Common myeloid progenitor, CD34-positive (primary cell): ENCODE measurements at regions of chr5 and their contacts with region 1.

Region 1: GRCh38 chr5:16489322-16489791 is 23.8 kb upstream of the ZNF622 start:
- DNase-seq: peak; percentile 39 to 66 (median 59)
- H3K4me3 ChIP-seq: no peak overlapping the region
- H3K27ac ChIP-seq: no peak overlapping the region
- H3K4me1 ChIP-seq: no peaks in the 10 kb centered on the region
- H3K27me3 ChIP-seq: no peaks in the 10 kb centered on the region

Region 2: GRCh38 chr5:16500024-16500423 is 10.7 kb after region 1 on chr5:
- CTCF ChIA-PET with region 1: interaction called, 14 read pairs
- POLR2A ChIA-PET with region 1: no interaction called
- DNase-seq: no peak
- H3K4me3 ChIP-seq: no peak overlapping the region
- H3K27ac ChIP-seq: no peak overlapping the region
- H3K4me1 ChIP-seq: no peaks in the 10 kb centered on the region
- H3K27me3 ChIP-seq: no peaks in the 10 kb centered on the region

Region 3: DNA sequence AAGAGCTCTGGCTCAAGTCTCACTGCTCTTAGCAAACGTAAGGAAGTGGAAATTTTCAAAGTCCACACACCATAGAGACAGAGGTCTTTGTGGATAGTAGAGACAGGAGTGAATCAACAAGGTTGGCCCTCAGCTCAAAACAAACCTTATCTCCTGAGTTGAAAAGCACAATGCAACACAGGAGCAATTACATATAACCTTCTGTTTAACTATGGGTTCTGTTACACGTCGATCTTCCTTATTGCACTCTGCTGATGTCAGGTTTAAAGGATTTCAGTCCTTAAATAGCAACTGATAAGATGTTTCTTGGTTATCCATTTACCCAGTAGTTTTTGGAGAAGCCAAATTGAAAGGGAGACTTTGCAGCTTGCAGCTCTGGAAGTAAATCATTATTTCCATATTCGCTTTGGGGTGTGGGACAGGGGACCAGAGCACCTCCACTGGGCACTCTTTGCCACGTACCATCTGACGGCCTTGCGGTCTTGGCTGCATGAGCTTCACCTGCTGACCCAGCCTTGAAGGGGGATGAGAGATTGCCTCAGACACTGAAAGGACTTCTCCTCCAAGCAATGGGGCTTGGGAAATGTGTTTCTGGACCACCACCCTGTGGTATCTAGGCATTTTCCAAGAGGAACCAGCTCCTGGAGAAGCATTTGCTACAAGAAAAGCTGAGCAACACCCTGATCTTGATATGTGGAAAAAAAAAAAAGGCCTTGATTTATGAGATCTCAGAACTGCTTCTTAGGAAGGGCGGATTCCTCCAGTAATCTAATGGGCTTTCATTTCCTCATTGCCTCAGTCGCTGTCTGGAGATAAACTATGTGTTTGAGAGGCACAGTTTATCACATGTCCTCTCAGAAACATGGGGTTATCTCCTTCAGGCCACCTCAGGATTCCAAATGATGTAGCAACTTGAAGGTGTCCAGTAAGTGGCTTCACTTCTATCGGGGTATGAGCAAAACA is 32.4 kb after region 1 on chr5:
- CTCF ChIA-PET with region 1: no interaction called
- POLR2A ChIA-PET with region 1: no interaction called
- DNase-seq: no peak
- H3K4me3 ChIP-seq: no peak overlapping the region
- H3K27ac ChIP-seq: no peak overlapping the region
- H3K4me1 ChIP-seq: no peaks in the 10 kb centered on the region
- H3K27me3 ChIP-seq: no peaks in the 10 kb centered on the region

Region 4: DNA sequence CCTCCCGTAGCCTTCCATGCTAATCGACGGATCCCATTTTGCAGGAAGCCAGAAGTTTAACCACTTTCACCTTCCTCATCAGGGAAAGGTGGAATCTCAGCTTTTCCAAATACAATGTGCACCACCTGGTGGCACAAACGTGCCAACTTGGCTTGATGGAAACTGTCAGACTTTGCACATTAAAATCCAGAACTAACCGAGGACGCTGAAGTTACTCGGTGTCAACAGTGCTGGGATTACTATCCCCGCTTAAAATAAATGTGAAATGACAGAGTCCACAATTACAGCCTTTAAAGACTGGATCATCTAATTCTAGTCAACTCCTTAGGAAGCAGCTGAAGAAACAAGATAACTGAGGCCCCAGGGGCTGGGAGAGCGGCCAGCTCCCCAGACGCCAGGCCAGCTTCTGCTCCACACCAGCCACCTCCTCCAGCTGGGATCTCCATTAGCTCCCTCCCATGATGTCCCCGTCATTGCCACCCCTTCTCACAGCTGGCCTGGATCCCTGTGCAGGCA is 177.6 kb after region 1 on chr5:
- CTCF ChIA-PET with region 1: interaction called, 38 read pairs
- POLR2A ChIA-PET with region 1: no interaction called
- DNase-seq: peak; percentile 4 to 38 (median 21)
- H3K4me3 ChIP-seq: no peak overlapping the region
- H3K27ac ChIP-seq: no peak overlapping the region
- H3K4me1 ChIP-seq: no peaks in the 10 kb centered on the region
- H3K27me3 ChIP-seq: no peaks in the 10 kb centered on the region